ENCODE measurements at regions of chr2 and their contacts with region 1.

Region 1: DNA sequence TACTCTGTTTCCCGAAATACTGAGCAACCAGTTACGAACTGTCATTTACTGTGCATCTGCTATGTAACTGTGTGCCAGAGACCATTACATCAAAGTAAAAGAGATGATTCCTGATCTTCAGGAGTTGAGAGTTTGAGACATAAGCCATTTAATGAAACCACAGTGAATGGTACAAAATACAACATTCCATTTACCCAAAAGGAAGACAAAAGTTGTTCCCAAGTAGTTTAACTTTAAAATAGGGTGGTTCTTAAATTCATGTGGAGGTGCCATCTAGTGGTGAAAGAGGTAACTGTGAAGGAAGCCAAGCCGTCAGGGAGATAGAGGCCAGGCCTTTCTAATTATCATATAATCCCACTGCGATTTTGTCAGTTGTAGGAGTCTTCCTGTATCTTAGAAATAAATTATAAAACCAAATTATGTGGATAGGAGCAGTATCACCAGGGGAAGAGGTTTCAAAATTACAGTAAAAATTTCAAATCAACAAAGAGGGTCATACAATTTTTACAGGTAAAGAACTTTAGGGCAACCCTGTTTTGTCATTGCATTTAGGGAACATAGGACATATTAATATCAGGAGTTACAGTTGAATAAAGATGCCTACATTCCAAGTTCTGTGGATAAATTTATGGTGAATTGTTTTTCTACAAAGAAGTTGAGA is 67.7 kb downstream of the EPAS1 start:
- DNase-seq: peak; percentile 72
- ATAC-seq: peak; percentile 48
- H3K4me3 ChIP-seq: no peak overlapping the region
- H3K27ac ChIP-seq: no peak overlapping the region
- H3K4me1 ChIP-seq: peaks cover 19% of the 10 kb centered on the region
- H3K27me3 ChIP-seq: no peaks in the 10 kb centered on the region
- CTCF ChIP-seq: peak; percentile 79
- POLR2A ChIP-seq: no peak
- RAD21 ChIP-seq: peak; percentile 83

Region 2: DNA sequence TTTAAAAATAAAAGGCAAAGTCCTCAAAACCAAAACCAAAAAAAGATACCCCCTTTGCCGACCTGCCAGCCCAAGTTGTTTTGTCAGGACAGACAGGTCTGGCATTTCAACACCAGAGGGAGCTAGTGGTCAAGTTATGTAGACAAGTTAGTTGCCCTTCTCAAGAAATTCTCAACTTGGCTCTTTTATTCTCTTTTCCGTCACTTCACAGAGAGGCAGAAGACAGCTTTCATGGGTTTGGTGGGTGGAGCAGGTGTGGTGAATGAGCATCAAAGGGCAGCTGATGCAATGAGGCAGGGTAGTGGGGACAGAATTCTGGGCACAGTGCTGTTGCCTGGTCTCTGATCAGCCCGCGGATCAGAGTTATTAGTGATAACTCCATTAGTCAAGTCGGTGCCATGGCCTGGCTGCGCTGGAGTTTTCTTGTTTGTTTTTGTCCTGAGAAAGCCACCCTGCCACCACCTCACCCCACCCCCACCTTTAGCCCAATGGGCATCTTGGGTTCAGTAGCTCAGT is 371.4 kb before region 1 on chr2:
- CTCF ChIA-PET with region 1: interaction called, 7 read pairs
- POLR2A ChIA-PET with region 1: no interaction called
- dilution Hi-C with region 1: no loop called
- in situ Hi-C with region 1: no loop called
- intact Hi-C with region 1: loop called (anchors 1 kb)
- DNase-seq: peak; percentile 89
- ATAC-seq: peak; percentile 73
- H3K4me3 ChIP-seq: no peak overlapping the region
- H3K27ac ChIP-seq: peak overlapping the region; percentile 8; the same call in 1 of the 2 replicates
- H3K4me1 ChIP-seq: peaks cover 19% of the 10 kb centered on the region
- H3K27me3 ChIP-seq: no peaks in the 10 kb centered on the region
- CTCF ChIP-seq: peak; percentile 85
- POLR2A ChIP-seq: no peak
- RAD21 ChIP-seq: peak; percentile 92

Region 3: GRCh38 chr2:46010925-46011490 is 353.9 kb before region 1 on chr2:
- CTCF ChIA-PET with region 1: interaction called, 3 read pairs
- POLR2A ChIA-PET with region 1: no interaction called
- dilution Hi-C with region 1: no loop called
- in situ Hi-C with region 1: loop called (anchors 25 kb)
- intact Hi-C with region 1: loop called (anchors 1 kb)
- DNase-seq: peak; percentile 74
- ATAC-seq: peak; percentile 59
- H3K4me3 ChIP-seq: no peak overlapping the region
- H3K27ac ChIP-seq: peak overlapping the region; percentile 48; the same call in 1 of the 2 replicates
- H3K4me1 ChIP-seq: peaks cover 38% of the 10 kb centered on the region
- H3K27me3 ChIP-seq: no peaks in the 10 kb centered on the region
- CTCF ChIP-seq: peak; percentile 76
- POLR2A ChIP-seq: no peak
- RAD21 ChIP-seq: peak; percentile 70

Region 4: GRCh38 chr2:46062637-46063412 is 302.1 kb before region 1 on chr2:
- CTCF ChIA-PET with region 1: interaction called, 7 read pairs
- POLR2A ChIA-PET with region 1: interaction called, 3 read pairs
- dilution Hi-C with region 1: no loop called
- in situ Hi-C with region 1: no loop called
- intact Hi-C with region 1: loop called (anchors 1 kb)
- DNase-seq: peak; percentile 87
- ATAC-seq: peak; percentile 66
- H3K4me3 ChIP-seq: no peak overlapping the region
- H3K27ac ChIP-seq: no peak overlapping the region
- H3K4me1 ChIP-seq: peaks cover 15% of the 10 kb centered on the region
- H3K27me3 ChIP-seq: no peaks in the 10 kb centered on the region
- CTCF ChIP-seq: peak; percentile 82
- POLR2A ChIP-seq: no peak
- RAD21 ChIP-seq: peak; percentile 95

Region 5: DNA sequence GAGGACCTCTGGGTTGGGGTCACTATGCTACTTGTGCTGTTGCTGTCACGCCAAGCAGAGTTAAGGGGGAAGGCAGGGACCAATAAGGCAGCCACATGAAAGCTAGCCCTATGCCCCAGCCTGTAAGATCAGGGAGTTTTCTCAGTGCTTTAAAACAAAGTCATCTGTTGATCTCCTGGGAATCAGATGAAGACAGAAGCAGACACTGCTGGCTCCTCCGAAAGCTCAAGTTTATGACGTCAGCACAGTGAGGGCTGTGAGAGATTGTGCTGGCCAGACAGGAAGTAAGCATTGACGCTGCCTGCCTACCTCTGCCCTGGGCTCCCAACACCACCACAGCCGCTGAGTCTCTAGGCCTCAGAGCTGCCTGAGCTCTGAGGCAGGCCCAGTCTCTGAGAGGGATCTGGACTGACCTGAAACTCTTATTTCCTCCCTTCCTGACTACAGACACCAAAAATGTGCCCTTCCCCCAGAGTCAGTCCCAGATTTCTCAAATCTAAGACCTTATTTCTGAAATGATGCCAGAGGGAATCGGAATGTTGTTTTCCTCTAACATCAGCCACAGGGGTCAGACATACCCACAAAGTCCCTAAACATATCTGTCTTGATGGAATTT is 185.8 kb before region 1 on chr2:
- CTCF ChIA-PET with region 1: no interaction called
- POLR2A ChIA-PET with region 1: no interaction called
- dilution Hi-C with region 1: no loop called
- in situ Hi-C with region 1: no loop called
- intact Hi-C with region 1: loop called (anchors 2 kb)
- DNase-seq: peak; percentile 99
- ATAC-seq: peak; percentile 96
- H3K4me3 ChIP-seq: no peak overlapping the region
- H3K27ac ChIP-seq: peak overlapping the region; percentile 98
- H3K4me1 ChIP-seq: peaks cover 17% of the 10 kb centered on the region
- H3K27me3 ChIP-seq: no peaks in the 10 kb centered on the region
- CTCF ChIP-seq: no peak
- POLR2A ChIP-seq: peak; percentile 89
- RAD21 ChIP-seq: peak; percentile 38

Region 6: GRCh38 chr2:46306330-46306751 is 58.6 kb before region 1 on chr2:
- CTCF ChIA-PET with region 1: no interaction called
- POLR2A ChIA-PET with region 1: no interaction called
- dilution Hi-C with region 1: no loop called
- in situ Hi-C with region 1: loop called (anchors 5 kb)
- intact Hi-C with region 1: no loop called
- DNase-seq: peak; percentile 37
- ATAC-seq: no peak
- H3K4me3 ChIP-seq: no peak overlapping the region
- H3K27ac ChIP-seq: no peak overlapping the region
- H3K4me1 ChIP-seq: peaks cover 26% of the 10 kb centered on the region
- H3K27me3 ChIP-seq: no peaks in the 10 kb centered on the region
- CTCF ChIP-seq: no peak
- POLR2A ChIP-seq: no peak
- RAD21 ChIP-seq: no peak

Region 7: DNA sequence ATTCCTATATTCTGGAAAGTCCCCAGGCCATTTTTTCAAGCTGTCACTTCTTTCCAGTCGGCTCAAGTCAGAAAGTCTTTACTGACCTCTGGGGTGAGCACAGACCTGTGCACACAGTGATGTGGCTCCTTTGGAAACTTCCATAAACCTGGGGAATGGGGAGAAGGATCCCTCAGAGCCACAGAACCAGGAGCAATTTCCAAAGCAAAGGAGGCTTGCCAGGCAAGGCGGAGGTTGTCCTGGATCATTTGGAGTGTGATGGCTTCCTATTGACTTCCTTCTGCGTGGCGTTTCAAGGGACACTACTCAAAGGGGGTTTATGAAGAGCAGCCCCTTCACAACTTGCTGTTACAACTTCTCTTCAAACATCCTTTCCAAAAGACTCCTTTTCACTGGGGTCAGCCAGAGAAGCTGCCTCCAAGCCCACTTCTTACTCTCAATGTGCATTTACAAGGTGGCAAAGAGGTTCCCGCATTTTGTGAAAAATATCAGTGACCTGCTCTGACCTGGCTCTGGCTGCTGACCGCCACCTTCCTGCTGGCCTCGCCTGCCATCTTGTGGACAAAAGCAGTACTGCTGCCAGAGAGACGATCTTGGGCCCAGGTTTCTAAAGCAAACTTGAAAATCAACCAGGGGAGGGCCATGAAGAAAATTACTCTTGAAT is 96.2 kb after region 1 on chr2:
- CTCF ChIA-PET with region 1: interaction called, 3 read pairs
- POLR2A ChIA-PET with region 1: no interaction called
- dilution Hi-C with region 1: no loop called
- in situ Hi-C with region 1: no loop called
- intact Hi-C with region 1: loop called (anchors 2 kb)
- DNase-seq: peak; percentile 65
- ATAC-seq: peak; percentile 79
- H3K4me3 ChIP-seq: no peak overlapping the region
- H3K27ac ChIP-seq: peak overlapping the region; percentile 6; the same call in 1 of the 2 replicates
- H3K4me1 ChIP-seq: peaks cover 15% of the 10 kb centered on the region
- H3K27me3 ChIP-seq: no peaks in the 10 kb centered on the region
- CTCF ChIP-seq: peak; percentile 97
- POLR2A ChIP-seq: peak; percentile 55; the same call in 1 of the 2 replicates
- RAD21 ChIP-seq: peak; percentile 100